ENCODE measurements at regions of chr18 and their contacts with region 1.

Region 1: GRCh38 chr18:74495581-74496507 is at the start of gene CNDP2:
- DNase-seq: peak; percentile 96 to 100
- H3K4me3 ChIP-seq: peak within 1 kb of the TSS; percentile 83 to 94 (median 88)
- H3K27ac ChIP-seq: peak within 1 kb of the TSS; percentile 93
- H3K4me1 ChIP-seq: peaks cover 2 to 16% (median 5%) of the 10 kb centered on the region in 4 experiments; a peak in 5 of 7 replicates
- H3K27me3 ChIP-seq: no peaks in the 10 kb centered on the region
- CTCF ChIP-seq: no peak
- EP300 ChIP-seq: no peak; a peak in 1 of 3 replicates
- POLR2A ChIP-seq: peak; percentile 82 to 92
- RAD21 ChIP-seq: no peak
- total RNA-seq, gene CNDP2: 243 TPM in 2 replicates

Region 2: GRCh38 chr18:74353169-74353775 is 142.6 kb before region 1 on chr18:
- CTCF ChIA-PET with region 1: interaction called, 98 read pairs
- POLR2A ChIA-PET with region 1: no interaction called
- DNase-seq: peak in 1 of 2 experiments; percentile 13
- H3K4me3 ChIP-seq: no peak overlapping the region
- H3K27ac ChIP-seq: no peak overlapping the region
- H3K4me1 ChIP-seq: no peaks in the 10 kb centered on the region
- H3K27me3 ChIP-seq: no peaks in the 10 kb centered on the region
- CTCF ChIP-seq: peak; percentile 48 to 88 (median 82)
- EP300 ChIP-seq: no peak
- POLR2A ChIP-seq: no peak
- RAD21 ChIP-seq: peak; percentile 88 to 91

Region 3: DNA sequence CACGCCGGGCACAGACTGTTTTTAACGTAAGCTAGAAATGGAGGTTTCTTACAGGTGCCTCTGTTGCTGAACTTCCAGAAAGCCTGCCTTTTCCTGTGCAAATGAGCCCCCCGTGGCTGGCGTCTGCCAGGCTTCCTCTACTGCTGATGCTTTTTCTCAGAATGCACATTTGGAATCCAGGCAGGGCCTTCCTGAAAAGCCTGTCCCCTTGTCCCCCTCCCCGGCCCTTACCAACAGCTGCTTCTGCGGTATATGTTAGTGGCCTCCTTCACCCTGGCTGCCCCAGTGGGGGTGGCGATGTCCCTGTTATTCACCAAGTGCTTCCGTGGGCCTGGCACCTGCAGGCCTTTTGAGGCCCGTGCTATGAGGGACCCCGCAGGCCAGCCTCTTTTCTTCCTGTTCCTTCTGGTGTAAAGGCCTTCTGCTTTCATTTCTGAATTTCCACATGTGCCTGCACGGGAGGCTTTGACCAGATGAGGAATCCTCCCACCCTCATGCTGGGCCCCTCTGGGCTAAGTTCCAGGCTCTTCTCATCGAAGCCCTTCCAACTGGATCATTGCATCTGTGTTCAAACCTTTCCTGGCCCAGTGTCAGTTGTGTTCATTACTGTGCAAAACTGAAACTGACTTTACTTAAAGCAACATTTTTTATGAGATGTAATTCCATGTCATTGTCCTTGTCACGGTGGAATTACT is 10.7 kb after region 1 on chr18:
- CTCF ChIA-PET with region 1: interaction called, 3 read pairs
- POLR2A ChIA-PET with region 1: interaction called, 19 read pairs
- DNase-seq: no peak
- H3K4me3 ChIP-seq: no peak overlapping the region
- H3K27ac ChIP-seq: no peak overlapping the region
- H3K4me1 ChIP-seq: peaks cover 0 to 3% (median 2%) of the 10 kb centered on the region in 4 experiments; a peak in 4 of 7 replicates
- H3K27me3 ChIP-seq: no peaks in the 10 kb centered on the region
- CTCF ChIP-seq: no peak
- EP300 ChIP-seq: no peak
- POLR2A ChIP-seq: no peak
- RAD21 ChIP-seq: no peak

Region 4: GRCh38 chr18:74515620-74516231 is 19.9 kb after region 1 on chr18:
- CTCF ChIA-PET with region 1: interaction called, 4 read pairs
- POLR2A ChIA-PET with region 1: interaction called, 10 read pairs
- DNase-seq: no peak
- H3K4me3 ChIP-seq: no peak overlapping the region
- H3K27ac ChIP-seq: no peak overlapping the region
- H3K4me1 ChIP-seq: no peaks in the 10 kb centered on the region
- H3K27me3 ChIP-seq: no peaks in the 10 kb centered on the region
- CTCF ChIP-seq: no peak
- EP300 ChIP-seq: no peak
- POLR2A ChIP-seq: no peak
- RAD21 ChIP-seq: no peak

Region 5: GRCh38 chr18:74760446-74760845 is 264.6 kb after region 1 on chr18:
- CTCF ChIA-PET with region 1: no interaction called
- POLR2A ChIA-PET with region 1: no interaction called
- DNase-seq: no peak
- H3K4me3 ChIP-seq: no peak overlapping the region
- H3K27ac ChIP-seq: no peak overlapping the region
- H3K4me1 ChIP-seq: no peaks in the 10 kb centered on the region; a peak in 1 of 7 replicates
- H3K27me3 ChIP-seq: no peaks in the 10 kb centered on the region
- CTCF ChIP-seq: no peak
- EP300 ChIP-seq: no peak
- POLR2A ChIP-seq: no peak
- RAD21 ChIP-seq: no peak

Measured in H1 (cell line).